ENCODE measurements at regions of chr11 and their contacts with region 1.

Region 1: DNA sequence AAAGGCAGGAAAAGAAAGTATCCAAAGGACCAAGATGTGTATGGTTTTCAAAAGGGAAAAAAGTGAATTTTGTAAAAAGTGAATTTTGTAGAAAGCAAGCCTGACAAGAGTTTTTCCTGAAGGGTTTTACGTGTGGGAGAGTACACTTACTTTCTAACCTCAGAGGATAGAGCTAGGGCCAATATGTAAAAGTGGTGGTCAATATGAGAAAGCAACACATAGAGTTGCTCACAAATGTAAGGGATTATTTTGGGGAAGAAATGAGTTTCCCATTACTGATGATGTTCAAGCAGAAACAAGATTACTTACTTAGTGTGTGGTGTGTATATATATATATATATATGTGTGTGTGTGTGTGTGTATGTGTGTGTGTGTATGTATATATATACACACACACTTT is 162.5 kb downstream of the SWAP70 start:
- DNase-seq: no peak
- H3K4me3 ChIP-seq: no peak overlapping the region
- H3K27ac ChIP-seq: no peak overlapping the region
- H3K4me1 ChIP-seq: no peaks in the 10 kb centered on the region
- H3K27me3 ChIP-seq: no peaks in the 10 kb centered on the region
- CTCF ChIP-seq: no peak

Region 2: DNA sequence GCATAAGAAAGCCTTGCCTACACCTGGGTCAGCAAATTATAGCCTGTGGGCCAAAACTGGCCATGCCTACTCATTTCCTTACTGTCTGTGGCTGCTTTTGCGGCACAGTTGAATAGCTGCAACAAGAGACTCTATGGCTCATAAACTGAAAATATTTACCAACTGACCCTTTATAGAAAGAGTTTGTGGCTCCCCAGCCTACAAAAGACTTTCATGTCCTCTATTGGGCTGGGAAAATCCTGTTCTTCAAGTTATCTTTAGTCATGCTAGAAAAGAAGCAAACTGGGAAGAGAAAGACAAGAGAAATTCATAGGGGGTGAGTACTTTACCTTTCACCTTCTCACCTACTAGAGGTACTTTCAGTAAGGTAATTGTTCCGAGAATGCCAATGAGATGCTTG is 12.6 kb after region 1 on chr11:
- CTCF ChIA-PET with region 1: no interaction called
- POLR2A ChIA-PET with region 1: no interaction called
- intact Hi-C with region 1: loop called (anchors 1 kb)
- DNase-seq: no peak
- H3K4me3 ChIP-seq: no peak overlapping the region
- H3K27ac ChIP-seq: no peak overlapping the region
- H3K4me1 ChIP-seq: peaks cover 12% of the 10 kb centered on the region
- H3K27me3 ChIP-seq: no peaks in the 10 kb centered on the region
- CTCF ChIP-seq: no peak

Measured in A673 (cell line).